AG04450 (cell line): ENCODE measurements at regions of chr6 and their contacts with region 1.

Region 1: GRCh38 chr6:90393232-90393884 is 96.7 kb upstream of the BACH2 start:
- DNase-seq: peak; percentile 32
- H3K4me3 ChIP-seq: no peak overlapping the region
- H3K27ac ChIP-seq: no peak overlapping the region
- H3K27me3 ChIP-seq: peaks cover 10% of the 10 kb centered on the region
- CTCF ChIP-seq: peak; percentile 87

Region 2: DNA sequence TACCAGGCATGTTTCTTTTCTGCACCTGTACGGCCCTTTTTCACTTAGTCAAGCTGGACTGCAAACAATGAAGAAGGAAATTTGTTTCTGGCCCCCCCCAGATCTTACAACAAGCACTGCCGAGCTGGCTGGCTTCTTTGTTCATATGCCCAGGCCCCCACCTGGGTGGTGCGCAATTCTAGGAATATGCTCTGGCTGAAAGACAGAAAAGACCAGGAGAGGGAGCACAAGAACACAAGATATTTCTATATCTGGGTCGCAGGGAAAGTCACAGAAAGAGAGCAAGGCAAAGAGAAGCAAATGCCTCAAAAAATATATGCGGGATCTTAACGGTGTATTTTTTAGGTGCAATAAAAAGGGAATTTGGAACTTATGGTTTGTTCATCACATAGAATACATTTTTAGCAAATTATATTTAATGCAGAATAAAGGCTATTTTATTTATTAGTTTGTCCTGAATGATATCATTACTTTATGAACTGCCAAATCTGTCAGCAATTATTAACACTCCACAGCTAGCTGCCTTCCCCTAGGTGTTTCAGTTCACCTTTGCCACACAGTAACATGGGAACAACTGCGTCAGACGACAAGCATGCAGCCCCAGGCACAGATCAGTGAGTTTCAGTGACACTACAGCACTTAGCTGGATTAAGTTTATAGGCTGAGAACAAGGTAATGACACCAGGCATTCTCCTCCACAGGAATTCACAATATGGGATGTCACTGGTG is 422.6 kb before region 1 on chr6:
- CTCF ChIA-PET with region 1: interaction called, 30 read pairs
- POLR2A ChIA-PET with region 1: no interaction called
- DNase-seq: no peak
- H3K4me3 ChIP-seq: no peak overlapping the region
- H3K27ac ChIP-seq: no peak overlapping the region
- H3K27me3 ChIP-seq: peaks cover 4% of the 10 kb centered on the region
- CTCF ChIP-seq: peak; percentile 73

Region 3: GRCh38 chr6:89984926-89985750 is 408.2 kb before region 1 on chr6:
- CTCF ChIA-PET with region 1: interaction called, 12 read pairs
- POLR2A ChIA-PET with region 1: no interaction called
- DNase-seq: no peak
- H3K4me3 ChIP-seq: no peak overlapping the region
- H3K27ac ChIP-seq: peak overlapping the region; percentile 94
- H3K27me3 ChIP-seq: no peaks in the 10 kb centered on the region
- CTCF ChIP-seq: no peak

Region 4: DNA sequence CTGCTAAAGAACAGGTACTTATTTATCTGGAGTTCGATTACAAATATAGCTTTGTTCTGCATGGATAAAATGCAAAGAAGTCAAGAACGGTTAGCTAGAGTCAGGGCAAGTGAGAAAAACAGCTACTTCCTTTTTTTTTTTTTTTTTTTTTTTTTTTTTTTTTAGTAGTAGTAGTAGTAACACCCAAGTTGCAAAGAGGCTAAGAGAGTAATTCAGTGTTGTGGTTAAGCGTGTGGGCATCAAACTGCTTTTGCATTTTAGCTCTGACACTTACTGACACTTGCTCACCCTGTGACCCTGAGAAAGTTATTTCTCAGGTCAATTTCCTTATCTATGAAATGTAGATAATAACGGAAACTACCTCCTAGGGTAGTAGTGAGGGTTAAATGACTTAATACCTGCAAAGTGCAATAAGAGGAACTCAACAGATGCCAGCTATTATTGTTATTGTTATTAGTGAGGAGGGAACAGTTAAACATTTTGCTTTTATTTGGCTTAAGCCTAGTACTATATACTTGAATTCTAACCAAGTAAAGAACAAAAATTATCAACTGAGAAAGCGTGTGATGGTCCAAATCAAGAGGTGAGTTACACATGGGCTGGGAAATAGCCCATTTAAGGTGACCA is 10.0 kb before region 1 on chr6:
- CTCF ChIA-PET with region 1: interaction called, 21 read pairs
- POLR2A ChIA-PET with region 1: no interaction called
- DNase-seq: no peak
- H3K4me3 ChIP-seq: no peak overlapping the region
- H3K27ac ChIP-seq: no peak overlapping the region
- H3K27me3 ChIP-seq: no peaks in the 10 kb centered on the region
- CTCF ChIP-seq: no peak

Region 5: DNA sequence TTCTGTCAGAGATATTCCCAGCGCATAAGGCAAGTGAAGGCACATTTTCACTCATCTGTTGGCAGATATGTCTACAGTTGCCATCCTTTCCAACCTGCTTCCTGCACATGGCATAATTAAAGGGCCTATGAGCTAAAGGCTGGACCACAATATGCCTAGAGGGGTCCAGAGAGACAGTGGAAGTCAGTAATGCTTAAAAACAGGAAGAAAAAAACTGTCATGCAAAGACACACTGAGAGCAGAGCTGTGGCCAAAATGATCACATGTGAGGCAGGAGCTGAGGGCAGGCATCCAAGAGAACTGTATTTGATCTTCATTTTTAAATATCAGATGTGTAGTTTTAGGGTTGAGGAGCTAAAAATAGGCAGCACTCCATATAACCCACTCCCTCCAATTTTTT is 28.3 kb after region 1 on chr6:
- CTCF ChIA-PET with region 1: interaction called, 10 read pairs
- POLR2A ChIA-PET with region 1: no interaction called
- DNase-seq: no peak
- H3K4me3 ChIP-seq: no peak overlapping the region
- H3K27ac ChIP-seq: peak overlapping the region; percentile 12
- H3K27me3 ChIP-seq: peaks cover 11% of the 10 kb centered on the region
- CTCF ChIP-seq: no peak